ENCODE measurements at regions of chr10 and their contacts with region 1.

Region 1: GRCh38 chr10:95430231-95430951 is 130.8 kb downstream of the SORBS1 start:
- DNase-seq: peak; percentile 58 to 70
- ATAC-seq: peak; percentile 88 to 97; a peak in 5 of 6 replicates
- H3K4me3 ChIP-seq: no peak overlapping the region
- H3K27ac ChIP-seq: no peak overlapping the region
- H3K4me1 ChIP-seq: no peaks in the 10 kb centered on the region
- CTCF ChIP-seq: peak; percentile 96
- EP300 ChIP-seq: no peak
- POLR2A ChIP-seq: no peak
- RAD21 ChIP-seq: peak; percentile 90 to 94

Region 2: GRCh38 chr10:95391581-95392216 is 38.7 kb before region 1 on chr10:
- CTCF ChIA-PET with region 1: interaction called, 10 read pairs
- POLR2A ChIA-PET with region 1: no interaction called
- DNase-seq: peak; percentile 8 to 23
- ATAC-seq: peak; percentile 54 to 74; a peak in 5 of 6 replicates
- H3K4me3 ChIP-seq: no peak overlapping the region
- H3K27ac ChIP-seq: no peak overlapping the region
- H3K4me1 ChIP-seq: peaks cover 18% of the 10 kb centered on the region
- CTCF ChIP-seq: no peak
- EP300 ChIP-seq: no peak
- POLR2A ChIP-seq: no peak
- RAD21 ChIP-seq: no peak

Region 3: DNA sequence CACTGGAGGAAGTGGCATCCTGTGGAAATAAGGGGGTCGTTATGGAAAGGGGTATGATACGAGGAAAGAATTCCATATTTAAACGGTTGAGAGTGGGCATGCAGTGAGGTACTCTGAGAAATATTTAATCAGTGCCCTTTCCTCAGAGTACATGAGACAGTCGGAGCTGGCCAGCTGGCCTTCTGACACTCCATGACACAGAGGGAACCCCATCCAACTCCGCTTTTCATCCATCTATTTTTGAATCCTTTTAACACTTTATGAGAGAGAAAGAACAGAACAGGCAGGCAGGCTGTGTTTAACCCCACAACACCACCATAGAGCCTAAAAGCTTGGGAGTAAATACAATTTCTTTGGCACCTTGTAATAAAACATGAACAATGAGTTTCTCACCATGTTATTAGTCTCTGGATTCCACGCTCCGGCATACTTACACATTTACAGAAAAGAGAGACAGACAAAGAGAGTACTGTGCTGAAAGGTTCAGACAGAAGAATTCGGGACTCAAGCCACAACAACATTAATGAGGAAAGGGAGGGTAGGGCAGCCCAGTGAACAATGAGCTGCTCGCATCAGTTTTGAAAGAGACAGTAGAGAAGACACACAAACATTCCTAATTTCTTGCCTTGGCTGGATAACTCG is 15.4 kb before region 1 on chr10:
- CTCF ChIA-PET with region 1: interaction called, 36 read pairs
- POLR2A ChIA-PET with region 1: no interaction called
- DNase-seq: no peak
- ATAC-seq: no peak
- H3K4me3 ChIP-seq: no peak overlapping the region
- H3K27ac ChIP-seq: no peak overlapping the region
- H3K4me1 ChIP-seq: no peaks in the 10 kb centered on the region
- CTCF ChIP-seq: no peak
- EP300 ChIP-seq: no peak
- POLR2A ChIP-seq: no peak
- RAD21 ChIP-seq: no peak

Region 4: GRCh38 chr10:95451568-95452524 is 21.5 kb after region 1 on chr10:
- CTCF ChIA-PET with region 1: interaction called, 201 read pairs
- POLR2A ChIA-PET with region 1: no interaction called
- DNase-seq: no peak
- ATAC-seq: no peak
- H3K4me3 ChIP-seq: no peak overlapping the region
- H3K27ac ChIP-seq: no peak overlapping the region
- H3K4me1 ChIP-seq: no peaks in the 10 kb centered on the region
- CTCF ChIP-seq: no peak
- EP300 ChIP-seq: no peak
- POLR2A ChIP-seq: no peak
- RAD21 ChIP-seq: no peak

Region 5: GRCh38 chr10:95478935-95479334 is 48.5 kb after region 1 on chr10:
- CTCF ChIA-PET with region 1: interaction called, 13 read pairs
- POLR2A ChIA-PET with region 1: no interaction called
- DNase-seq: no peak
- ATAC-seq: no peak
- H3K4me3 ChIP-seq: no peak overlapping the region
- H3K27ac ChIP-seq: no peak overlapping the region
- H3K4me1 ChIP-seq: no peaks in the 10 kb centered on the region
- CTCF ChIP-seq: no peak
- EP300 ChIP-seq: no peak
- POLR2A ChIP-seq: no peak
- RAD21 ChIP-seq: no peak

Region 6: GRCh38 chr10:95588025-95588424 is 157.6 kb after region 1 on chr10:
- CTCF ChIA-PET with region 1: interaction called, 25 read pairs
- POLR2A ChIA-PET with region 1: no interaction called
- DNase-seq: no peak
- ATAC-seq: no peak
- H3K4me3 ChIP-seq: no peak overlapping the region
- H3K27ac ChIP-seq: no peak overlapping the region
- H3K4me1 ChIP-seq: no peaks in the 10 kb centered on the region
- CTCF ChIP-seq: no peak
- EP300 ChIP-seq: no peak
- POLR2A ChIP-seq: no peak
- RAD21 ChIP-seq: no peak

Measured in A549 (cell line).